Dendritic cell treated with granulocyte-macrophage colony-stimulating factor and Interleukin-4, amounts not matched to agents 40 ng/mL and 50 ng/mL, for 4 days (primary cell): ENCODE measurements at regions of chr1 and their contacts with region 1.

Region 1: GRCh38 chr1:203273206-203273868 is 32.0 kb upstream of the BTG2 start:
- H3K4me3 Mint-ChIP-seq: peak overlapping the region; percentile 79
- H3K27ac Mint-ChIP-seq: peak overlapping the region; percentile 94
- H3K4me1 Mint-ChIP-seq: peaks cover 80% of the 10 kb centered on the region
- H3K27me3 Mint-ChIP-seq: no peaks in the 10 kb centered on the region

Region 2: DNA sequence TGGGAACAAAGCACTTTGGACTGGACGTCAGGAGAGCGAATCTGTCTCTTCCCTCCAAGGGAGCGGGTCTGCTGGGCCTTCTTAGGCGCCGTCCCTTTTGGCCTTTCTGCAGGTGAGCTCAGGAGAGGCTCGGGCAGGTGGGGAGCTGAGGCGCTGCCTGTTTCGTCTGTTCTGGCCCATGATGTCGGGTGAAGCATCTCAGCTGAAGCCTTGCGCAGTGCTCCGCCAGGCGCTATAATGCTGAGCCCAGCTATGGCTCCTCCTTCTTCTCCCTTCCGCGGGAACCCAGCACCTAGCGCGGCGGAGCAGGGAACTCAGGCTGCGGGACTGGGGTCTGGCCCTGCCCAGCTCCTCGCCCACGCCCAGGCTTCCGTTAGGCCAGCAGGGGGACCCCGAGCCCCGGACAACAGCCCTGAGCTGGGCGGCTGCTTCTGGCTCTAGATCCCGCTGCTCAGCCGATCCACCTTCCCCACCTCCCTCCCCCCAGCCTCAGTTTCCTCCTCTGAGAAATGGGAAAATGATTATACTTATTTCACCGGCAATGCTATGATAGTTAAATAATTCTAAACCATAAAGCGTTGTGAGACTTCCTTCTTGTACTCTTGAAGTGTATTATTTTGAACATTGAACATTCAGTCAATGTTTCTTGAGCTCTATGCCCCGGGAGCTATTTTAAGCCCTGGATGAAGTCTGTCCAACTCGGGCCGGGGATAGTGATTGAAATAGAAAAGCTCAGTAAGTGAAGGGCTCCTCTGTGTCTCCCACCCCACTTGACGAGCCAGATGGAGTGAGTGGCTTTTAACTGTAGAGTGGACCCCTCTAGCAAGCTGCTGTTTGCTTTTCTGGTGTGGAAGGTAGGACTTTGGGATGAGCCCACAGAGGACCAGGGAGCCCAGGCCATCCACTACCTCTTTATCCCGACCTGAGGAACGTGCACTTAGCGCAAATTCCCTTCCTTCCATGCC is 155.4 kb before region 1 on chr1:
- intact Hi-C with region 1: loop called (anchors 2 kb)
- H3K4me3 Mint-ChIP-seq: no peak overlapping the region
- H3K27ac Mint-ChIP-seq: no peak overlapping the region
- H3K4me1 Mint-ChIP-seq: peaks cover 17% of the 10 kb centered on the region
- H3K27me3 Mint-ChIP-seq: peaks cover 67% of the 10 kb centered on the region

Region 3: GRCh38 chr1:203304919-203305808 is 31.8 kb after region 1 on chr1 and contains the start of gene BTG2:
- intact Hi-C with region 1: loop called (anchors 1 kb)
- H3K4me3 Mint-ChIP-seq: peak within 1 kb of the TSS; percentile 97
- H3K27ac Mint-ChIP-seq: peak within 1 kb of the TSS; percentile 96
- H3K4me1 Mint-ChIP-seq: peaks cover 67% of the 10 kb centered on the region
- H3K27me3 Mint-ChIP-seq: no peaks in the 10 kb centered on the region

Region 4: GRCh38 chr1:203340112-203340804 is 66.9 kb after region 1 on chr1:
- intact Hi-C with region 1: loop called (anchors 1 kb)
- H3K4me3 Mint-ChIP-seq: no peak overlapping the region
- H3K27ac Mint-ChIP-seq: no peak overlapping the region
- H3K4me1 Mint-ChIP-seq: peaks cover 21% of the 10 kb centered on the region
- H3K27me3 Mint-ChIP-seq: peaks cover 40% of the 10 kb centered on the region

Region 5: DNA sequence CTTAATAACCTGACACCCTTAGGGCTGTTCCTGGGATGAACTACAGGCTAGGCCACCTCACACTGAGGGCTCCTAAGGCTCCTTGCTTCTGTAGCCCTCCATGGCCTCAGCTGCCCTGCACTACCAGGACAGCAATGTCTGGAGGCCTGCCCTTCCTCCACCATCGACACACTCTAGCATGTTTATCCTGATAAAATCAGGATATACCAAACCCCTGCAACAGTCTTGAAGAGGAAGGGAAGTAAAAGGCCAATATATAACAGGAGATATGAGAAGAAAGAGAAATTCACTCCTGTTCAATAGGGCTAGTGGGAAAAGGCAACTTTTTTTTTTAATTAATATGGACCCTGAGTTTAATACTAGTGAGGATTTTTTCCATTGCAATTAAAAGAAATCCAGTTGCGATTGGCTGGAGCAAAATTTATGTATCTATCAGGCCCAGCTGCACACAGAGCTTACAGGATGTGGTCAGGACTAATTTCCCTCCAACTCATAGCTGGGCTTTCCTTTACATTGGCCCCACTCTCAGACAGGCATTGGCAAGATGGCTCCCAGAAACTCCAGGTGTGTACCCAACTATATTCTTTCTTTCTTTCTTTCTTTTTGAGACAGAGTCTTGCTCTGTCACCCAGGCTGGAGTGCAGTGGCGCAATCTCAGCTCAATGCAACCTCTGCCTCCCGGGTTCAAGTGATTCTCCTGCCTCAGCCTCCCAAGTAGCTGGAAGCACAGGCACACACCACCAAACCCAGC is 339.8 kb after region 1 on chr1:
- intact Hi-C with region 1: no loop called
- H3K4me3 Mint-ChIP-seq: no peak overlapping the region
- H3K27ac Mint-ChIP-seq: no peak overlapping the region
- H3K4me1 Mint-ChIP-seq: peaks cover 17% of the 10 kb centered on the region
- H3K27me3 Mint-ChIP-seq: peaks cover 4% of the 10 kb centered on the region